Activated CD4-positive, alpha-beta T cell treated with anti-CD3 and anti-CD28 coated beads for 36 hours (primary cell): ENCODE measurements at regions of chr1 and their contacts with region 1.

Region 1: DNA sequence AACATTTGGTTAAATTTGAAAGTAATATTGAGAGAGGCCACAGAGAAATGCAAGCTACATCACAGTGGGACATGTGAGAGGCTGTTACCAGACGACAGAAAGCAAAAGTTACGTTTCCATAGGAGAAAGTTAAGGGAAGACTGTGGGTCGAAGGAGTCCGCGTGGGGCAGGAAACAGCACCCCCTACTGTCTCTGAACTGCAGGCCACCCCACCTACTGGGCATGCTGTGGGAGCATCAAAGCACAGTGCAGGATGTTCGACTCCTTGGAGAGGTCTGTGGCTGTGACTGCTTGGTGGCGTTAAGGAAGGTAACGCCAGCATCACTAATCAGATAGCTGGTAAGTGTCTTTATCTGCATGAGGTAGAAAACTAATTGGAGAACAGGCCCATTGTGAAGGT is 123.9 kb downstream of the PTBP2 start:
- DNase-seq: peak; percentile 64
- ATAC-seq: peak; percentile 73
- H3K4me3 Mint-ChIP-seq: no peak overlapping the region
- H3K27ac Mint-ChIP-seq: no peak overlapping the region
- H3K4me1 Mint-ChIP-seq: no peaks in the 10 kb centered on the region
- H3K27me3 Mint-ChIP-seq: no peaks in the 10 kb centered on the region

Region 2: DNA sequence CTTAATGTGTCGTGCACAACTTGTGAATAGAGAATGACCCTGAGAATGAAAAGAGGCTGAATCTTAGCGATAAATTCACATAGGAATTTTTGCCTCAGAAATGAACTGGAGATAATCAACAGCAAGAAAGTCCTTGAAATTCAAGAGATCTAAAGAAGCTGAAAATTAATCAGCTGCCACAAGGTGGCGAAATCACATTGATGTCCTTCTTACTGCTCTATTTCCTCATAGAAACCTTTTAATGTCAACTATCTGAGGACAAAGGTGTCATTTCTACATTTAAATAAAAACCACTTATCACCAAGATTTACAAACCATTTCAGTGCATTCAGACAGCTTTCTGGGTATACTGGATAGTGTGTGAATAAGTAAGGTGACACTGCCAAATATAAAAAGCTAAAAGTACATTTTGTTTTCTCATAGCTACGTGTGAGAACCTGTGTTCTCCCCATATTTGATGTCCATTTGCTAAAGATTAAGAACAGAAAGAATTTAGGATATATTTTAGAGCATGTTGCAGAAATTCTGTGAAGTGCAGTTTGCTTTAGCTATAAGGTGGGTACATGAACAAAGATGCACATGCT is 609.2 kb before region 1 on chr1:
- CTCF ChIA-PET with region 1: no interaction called
- POLR2A ChIA-PET with region 1: no interaction called
- intact Hi-C with region 1: loop called (anchors 1 to 5 kb)
- DNase-seq: peak; percentile 20
- ATAC-seq: no peak
- H3K4me3 Mint-ChIP-seq: no peak overlapping the region
- H3K27ac Mint-ChIP-seq: no peak overlapping the region
- H3K4me1 Mint-ChIP-seq: no peaks in the 10 kb centered on the region
- H3K27me3 Mint-ChIP-seq: no peaks in the 10 kb centered on the region

Region 3: GRCh38 chr1:96596226-96596922 is 249.1 kb before region 1 on chr1:
- CTCF ChIA-PET with region 1: no interaction called
- POLR2A ChIA-PET with region 1: no interaction called
- intact Hi-C with region 1: loop called in 1 of 2 experiments (anchors 10 kb)
- DNase-seq: peak; percentile 55
- ATAC-seq: peak; percentile 57
- H3K4me3 Mint-ChIP-seq: no peak overlapping the region
- H3K27ac Mint-ChIP-seq: no peak overlapping the region
- H3K4me1 Mint-ChIP-seq: no peaks in the 10 kb centered on the region
- H3K27me3 Mint-ChIP-seq: no peaks in the 10 kb centered on the region